ENCODE measurements at regions of chr5 and their contacts with region 1.

Region 1: DNA sequence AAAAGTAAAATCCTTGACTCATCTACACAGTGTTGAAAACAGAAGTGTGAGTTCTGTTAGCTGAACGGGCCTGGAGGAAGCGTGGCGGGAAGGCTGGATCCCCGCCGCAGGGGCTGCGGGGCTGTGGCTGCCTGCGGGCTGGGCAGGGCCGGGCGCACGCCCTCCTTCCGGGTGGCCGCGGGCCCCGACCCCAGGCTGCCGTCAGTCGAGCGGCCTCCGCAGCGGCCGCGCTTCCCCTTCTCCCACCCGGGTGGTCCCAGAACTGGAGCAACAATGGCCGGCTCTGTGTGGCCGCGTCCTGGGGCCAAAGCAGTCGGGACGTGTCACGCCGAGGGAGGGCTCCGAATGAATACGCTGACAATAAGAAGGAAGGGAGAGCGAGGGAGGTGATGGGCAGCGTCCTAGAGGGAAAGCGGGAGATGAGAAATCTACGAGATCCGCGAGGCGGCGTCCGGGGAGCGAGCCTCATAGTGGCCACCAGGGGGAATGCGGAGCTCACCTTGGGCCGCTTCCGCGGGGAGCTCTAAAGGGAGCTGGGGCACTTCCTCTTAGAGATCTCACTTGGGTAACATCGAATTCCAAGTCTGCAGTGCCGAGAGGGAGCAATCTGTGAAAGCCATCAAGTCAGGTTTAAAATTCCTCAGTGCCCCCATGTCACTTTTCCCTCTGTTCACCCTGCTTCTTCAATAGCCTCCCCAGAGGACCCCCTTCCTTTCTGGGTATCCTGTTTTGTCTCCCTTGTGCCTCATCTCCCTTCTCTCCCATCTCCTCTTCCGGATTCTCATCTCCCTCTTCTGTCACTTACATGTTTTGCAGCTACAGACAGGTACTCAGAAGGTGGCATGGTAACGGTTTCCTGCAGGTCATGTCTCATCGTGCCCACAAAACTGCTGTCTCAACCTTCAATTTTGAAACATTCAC is 83.9 kb downstream of the SLC1A3 start:
- DNase-seq: peak; percentile 53
- ATAC-seq: peak; percentile 96
- H3K4me3 ChIP-seq: peak overlapping the region; percentile 49 to 71 (median 51)
- H3K27ac ChIP-seq: no peak overlapping the region
- H3K4me1 ChIP-seq: peaks cover 4% of the 10 kb centered on the region; the same call in 1 of the 2 replicates
- H3K27me3 ChIP-seq: peaks cover 0 to 6% of the 10 kb centered on the region in 2 experiments; a peak in 1 of 5 replicates
- CTCF ChIP-seq: peak; percentile 84
- EP300 ChIP-seq: no peak
- POLR2A ChIP-seq: no peak
- RAD21 ChIP-seq: no peak; the same call in 1 of the 2 replicates

Region 2: DNA sequence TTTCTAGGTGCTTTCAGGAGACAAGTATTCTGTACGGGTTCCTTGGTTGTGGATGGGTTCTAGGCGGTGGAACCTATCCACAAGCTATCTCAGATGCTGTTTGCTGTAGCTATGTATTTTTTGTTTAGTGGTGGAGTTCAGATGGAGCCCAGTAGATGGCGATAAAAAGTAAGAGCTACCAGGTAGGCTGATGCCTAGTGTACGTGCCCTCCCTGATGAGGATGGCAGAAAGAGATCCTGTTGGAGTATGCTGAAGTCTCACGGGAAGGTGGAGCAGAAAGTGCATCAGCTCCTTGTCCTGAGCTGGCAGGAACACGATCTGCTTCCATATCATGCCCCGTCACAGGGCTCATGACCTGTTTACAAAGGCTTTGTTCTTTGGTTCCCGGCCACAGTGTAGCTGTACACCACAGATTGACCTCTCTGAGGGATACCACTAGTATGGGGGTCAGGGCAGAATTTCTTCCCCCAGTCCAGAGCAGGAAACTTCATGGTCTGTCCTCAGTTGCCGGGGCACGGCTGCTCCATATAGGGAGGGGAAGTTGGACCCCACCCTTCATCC is 611.0 kb before region 1 on chr5:
- CTCF ChIA-PET with region 1: no interaction called
- POLR2A ChIA-PET with region 1: no interaction called
- in situ Hi-C with region 1: loop called (anchors 25 kb)
- intact Hi-C with region 1: loop called (anchors 10 kb)
- DNase-seq: peak; percentile 55
- ATAC-seq: peak; percentile 99
- H3K4me3 ChIP-seq: peak overlapping the region in 1 of 3 experiments; percentile 38; a peak in 1 of 6 replicates
- H3K27ac ChIP-seq: no peak overlapping the region
- H3K4me1 ChIP-seq: no peaks in the 10 kb centered on the region
- H3K27me3 ChIP-seq: no peaks in the 10 kb centered on the region
- CTCF ChIP-seq: peak; percentile 85
- EP300 ChIP-seq: no peak
- POLR2A ChIP-seq: no peak
- RAD21 ChIP-seq: peak; percentile 31; the same call in 1 of the 2 replicates

Region 3: GRCh38 chr5:36252722-36253365 is 437.5 kb before region 1 on chr5:
- CTCF ChIA-PET with region 1: no interaction called
- POLR2A ChIA-PET with region 1: no interaction called
- in situ Hi-C with region 1: loop called (anchors 25 kb)
- intact Hi-C with region 1: no loop called
- DNase-seq: no peak
- ATAC-seq: no peak
- H3K4me3 ChIP-seq: no peak overlapping the region
- H3K27ac ChIP-seq: no peak overlapping the region
- H3K4me1 ChIP-seq: no peaks in the 10 kb centered on the region
- H3K27me3 ChIP-seq: no peaks in the 10 kb centered on the region
- CTCF ChIP-seq: no peak
- EP300 ChIP-seq: no peak
- POLR2A ChIP-seq: no peak
- RAD21 ChIP-seq: no peak

Region 4: DNA sequence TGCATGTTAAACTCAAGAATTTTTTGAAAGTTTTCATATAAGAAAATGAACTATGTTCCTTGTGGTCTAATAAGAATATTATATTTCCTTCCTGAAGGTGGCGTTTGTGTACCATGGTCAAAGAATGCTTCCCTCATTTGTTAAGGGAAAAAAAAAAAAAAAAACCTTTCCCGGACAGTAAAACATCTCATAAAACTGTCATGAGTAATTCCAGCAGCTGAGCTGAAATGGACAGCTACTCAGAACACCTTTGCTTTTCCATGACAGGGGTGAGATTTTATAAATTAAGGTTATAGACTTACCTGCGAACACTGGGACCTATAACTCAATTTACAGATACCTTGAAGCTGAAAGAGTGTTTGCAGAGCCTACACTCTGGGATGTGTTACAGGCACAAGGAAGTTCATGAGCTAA is 275.4 kb before region 1 on chr5:
- CTCF ChIA-PET with region 1: interaction called, 9 read pairs
- POLR2A ChIA-PET with region 1: no interaction called
- in situ Hi-C with region 1: loop called (anchors 5 kb)
- intact Hi-C with region 1: loop called (anchors 1 kb)
- DNase-seq: peak; percentile 24
- ATAC-seq: peak; percentile 33; the same call in 1 of the 3 replicates
- H3K4me3 ChIP-seq: no peak overlapping the region
- H3K27ac ChIP-seq: no peak overlapping the region
- H3K4me1 ChIP-seq: peaks cover 20% of the 10 kb centered on the region
- H3K27me3 ChIP-seq: no peaks in the 10 kb centered on the region; a peak in 1 of 5 replicates
- CTCF ChIP-seq: peak; percentile 52
- EP300 ChIP-seq: no peak
- POLR2A ChIP-seq: no peak
- RAD21 ChIP-seq: no peak

Measured in HepG2 (cell line).